Mucosa of descending colon (tissue), 3 donors: ENCODE measurements at regions of chr4 and their contacts with region 1.

Region 1: GRCh38 chr4:168153596-168154440 is 61.5 kb downstream of the ANXA10 start:
- DNase-seq: peak; percentile 76 to 96 (median 77)
- ATAC-seq: peak; percentile 91
- H3K4me3 ChIP-seq: no peak overlapping the region
- H3K4me1 ChIP-seq: no peaks in the 10 kb centered on the region
- CTCF ChIP-seq: peak; percentile 15

Region 2: DNA sequence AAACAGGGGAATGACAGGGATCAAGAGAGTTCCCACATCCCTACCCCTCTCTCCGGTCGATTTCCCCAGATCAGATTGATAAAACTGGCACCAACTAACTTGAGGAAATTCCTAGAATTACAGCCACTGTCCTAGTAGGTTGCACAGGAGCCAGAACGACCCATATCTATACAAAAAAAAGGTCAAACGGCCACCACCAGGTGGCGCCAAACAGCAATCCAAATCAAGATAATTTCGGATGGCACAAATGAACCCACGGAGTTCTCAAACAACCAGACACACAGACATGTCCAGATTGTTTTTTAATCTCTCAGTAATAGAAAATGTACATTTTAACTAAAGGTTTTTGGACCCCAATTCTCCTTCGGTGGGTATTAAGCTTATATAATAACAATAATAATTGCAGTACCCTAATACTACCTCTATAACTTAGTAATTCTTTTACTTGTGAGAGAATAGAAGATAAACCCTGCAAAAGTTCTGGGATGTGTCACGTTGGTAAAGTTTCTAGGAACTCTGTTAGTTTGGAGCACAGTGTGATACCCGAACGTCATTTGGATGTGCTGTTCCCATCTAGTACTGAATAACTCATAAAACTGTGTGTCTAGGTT is 1132.2 kb before region 1 on chr4:
- intact Hi-C with region 1: loop called in 1 of 2 experiments (anchors 10 kb)
- DNase-seq: peak in 2 of 3 donors; percentile 62 to 87
- ATAC-seq: peak; percentile 58
- H3K4me3 ChIP-seq: no peak overlapping the region
- H3K4me1 ChIP-seq: no peaks in the 10 kb centered on the region
- CTCF ChIP-seq: peak; percentile 57